ENCODE measurements at regions of chr13 and their contacts with region 1.

Region 1: GRCh38 chr13:110444226-110444653 is 117.3 kb downstream of the RAB20 start:
- DNase-seq: no peak
- H3K4me3 ChIP-seq: no peak overlapping the region
- H3K4me3 Mint-ChIP-seq: no peak overlapping the region
- H3K27ac Mint-ChIP-seq: peak overlapping the region; percentile 17
- H3K4me1 ChIP-seq: peaks cover 67% of the 10 kb centered on the region
- H3K4me1 Mint-ChIP-seq: peaks cover 35% of the 10 kb centered on the region
- H3K27me3 ChIP-seq: no peaks in the 10 kb centered on the region
- H3K27me3 Mint-ChIP-seq: no peaks in the 10 kb centered on the region
- CTCF ChIP-seq: peak; percentile 16 to 18

Region 2: DNA sequence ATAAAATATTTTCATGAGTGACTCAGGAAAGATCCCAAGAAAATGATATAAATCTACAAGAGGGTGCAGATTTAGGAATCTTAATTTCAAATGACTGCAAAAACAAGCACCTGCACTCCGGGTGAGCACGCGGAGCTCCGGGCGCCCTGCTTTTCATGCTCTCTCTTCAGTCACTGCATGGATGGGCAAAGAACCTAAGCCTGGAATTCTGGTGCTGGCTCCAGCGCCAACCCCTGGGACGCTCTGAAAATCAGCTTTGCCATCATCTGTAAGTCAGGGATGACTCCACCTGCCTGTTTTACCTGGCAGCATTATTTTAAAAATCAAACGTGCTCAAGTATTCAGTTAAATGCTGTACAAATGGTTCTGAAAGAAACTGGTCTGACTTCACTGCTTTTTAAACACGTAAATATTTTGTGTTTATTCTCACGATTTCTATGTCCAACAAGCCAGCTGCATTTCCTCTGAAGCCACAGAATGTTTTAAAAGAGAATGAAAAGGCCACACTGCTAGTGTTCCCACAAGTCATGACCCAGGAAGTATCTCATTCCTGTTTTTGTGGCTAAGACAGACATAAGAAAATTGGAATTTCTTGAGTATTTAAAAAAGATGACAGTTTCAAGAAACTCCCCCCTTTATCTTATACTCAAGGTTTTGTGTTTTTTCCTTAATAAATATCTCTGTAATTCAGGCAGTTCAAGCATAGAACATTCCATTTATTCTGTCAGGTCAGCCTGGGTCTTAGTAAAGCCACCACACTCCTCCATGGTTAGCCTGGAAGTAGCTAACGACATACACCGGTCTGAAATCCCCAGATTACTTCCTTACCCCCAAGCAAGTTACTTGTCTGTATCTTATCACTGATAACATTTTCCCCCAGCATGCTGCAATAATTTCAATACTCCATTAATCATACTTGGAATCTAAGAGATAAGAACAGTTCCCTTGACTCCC is 218.4 kb before region 1 on chr13:
- CTCF ChIA-PET with region 1: no interaction called
- POLR2A ChIA-PET with region 1: no interaction called
- intact Hi-C with region 1: loop called (anchors 1 kb)
- DNase-seq: peak in 1 of 2 experiments; percentile 45
- H3K4me3 ChIP-seq: no peak overlapping the region
- H3K4me3 Mint-ChIP-seq: no peak overlapping the region
- H3K27ac Mint-ChIP-seq: peak overlapping the region; percentile 40
- H3K4me1 ChIP-seq: peaks cover 32% of the 10 kb centered on the region
- H3K4me1 Mint-ChIP-seq: peaks cover 22% of the 10 kb centered on the region
- H3K27me3 ChIP-seq: no peaks in the 10 kb centered on the region
- H3K27me3 Mint-ChIP-seq: no peaks in the 10 kb centered on the region
- CTCF ChIP-seq: no peak

Region 3: GRCh38 chr13:110412132-110412914 is 31.9 kb before region 1 on chr13:
- CTCF ChIA-PET with region 1: interaction called, 4 read pairs
- POLR2A ChIA-PET with region 1: no interaction called
- intact Hi-C with region 1: loop called (anchors 2 kb)
- DNase-seq: peak; percentile 80 to 88
- H3K4me3 ChIP-seq: no peak overlapping the region
- H3K4me3 Mint-ChIP-seq: no peak overlapping the region
- H3K27ac Mint-ChIP-seq: peak overlapping the region; percentile 83
- H3K4me1 ChIP-seq: peaks cover 13% of the 10 kb centered on the region
- H3K4me1 Mint-ChIP-seq: peaks cover 12% of the 10 kb centered on the region
- H3K27me3 ChIP-seq: no peaks in the 10 kb centered on the region
- H3K27me3 Mint-ChIP-seq: no peaks in the 10 kb centered on the region
- CTCF ChIP-seq: peak; percentile 94

Region 4: DNA sequence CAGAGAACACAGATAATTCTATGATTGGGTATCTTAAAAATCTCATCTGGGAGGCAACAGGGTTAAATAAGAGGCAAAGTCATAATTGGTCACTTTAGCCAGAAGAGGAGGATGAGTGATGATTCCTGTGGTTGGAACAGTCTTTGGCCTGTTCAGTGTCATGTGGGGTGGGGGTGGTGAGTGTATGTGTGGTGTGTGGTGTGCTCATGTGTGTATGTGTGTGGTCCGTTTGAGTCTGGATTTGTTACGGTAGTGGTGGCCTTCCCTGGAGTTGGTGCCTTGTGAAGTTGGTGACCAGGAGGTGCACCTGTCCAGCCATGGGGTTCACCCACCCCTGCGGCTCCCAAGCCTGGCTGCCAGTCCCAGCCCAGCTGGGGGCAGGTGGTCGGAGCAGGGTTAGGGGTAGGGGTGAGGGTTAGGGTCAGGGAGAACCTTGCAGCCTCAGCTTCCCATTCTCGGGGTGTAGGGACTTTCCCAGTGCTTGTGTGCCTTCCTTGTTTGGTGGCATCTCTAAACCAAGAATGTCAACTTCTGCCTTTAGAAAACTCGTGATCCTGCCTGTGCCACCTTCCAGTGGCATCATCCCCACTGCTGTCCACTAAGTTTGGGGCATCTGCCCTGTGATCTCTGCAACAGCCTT is 19.8 kb after region 1 on chr13:
- CTCF ChIA-PET with region 1: no interaction called
- POLR2A ChIA-PET with region 1: no interaction called
- intact Hi-C with region 1: no loop called
- DNase-seq: no peak
- H3K4me3 ChIP-seq: no peak overlapping the region
- H3K4me3 Mint-ChIP-seq: no peak overlapping the region
- H3K27ac Mint-ChIP-seq: no peak overlapping the region
- H3K4me1 ChIP-seq: no peaks in the 10 kb centered on the region
- H3K4me1 Mint-ChIP-seq: no peaks in the 10 kb centered on the region
- H3K27me3 ChIP-seq: no peaks in the 10 kb centered on the region
- H3K27me3 Mint-ChIP-seq: no peaks in the 10 kb centered on the region
- CTCF ChIP-seq: no peak

Region 5: DNA sequence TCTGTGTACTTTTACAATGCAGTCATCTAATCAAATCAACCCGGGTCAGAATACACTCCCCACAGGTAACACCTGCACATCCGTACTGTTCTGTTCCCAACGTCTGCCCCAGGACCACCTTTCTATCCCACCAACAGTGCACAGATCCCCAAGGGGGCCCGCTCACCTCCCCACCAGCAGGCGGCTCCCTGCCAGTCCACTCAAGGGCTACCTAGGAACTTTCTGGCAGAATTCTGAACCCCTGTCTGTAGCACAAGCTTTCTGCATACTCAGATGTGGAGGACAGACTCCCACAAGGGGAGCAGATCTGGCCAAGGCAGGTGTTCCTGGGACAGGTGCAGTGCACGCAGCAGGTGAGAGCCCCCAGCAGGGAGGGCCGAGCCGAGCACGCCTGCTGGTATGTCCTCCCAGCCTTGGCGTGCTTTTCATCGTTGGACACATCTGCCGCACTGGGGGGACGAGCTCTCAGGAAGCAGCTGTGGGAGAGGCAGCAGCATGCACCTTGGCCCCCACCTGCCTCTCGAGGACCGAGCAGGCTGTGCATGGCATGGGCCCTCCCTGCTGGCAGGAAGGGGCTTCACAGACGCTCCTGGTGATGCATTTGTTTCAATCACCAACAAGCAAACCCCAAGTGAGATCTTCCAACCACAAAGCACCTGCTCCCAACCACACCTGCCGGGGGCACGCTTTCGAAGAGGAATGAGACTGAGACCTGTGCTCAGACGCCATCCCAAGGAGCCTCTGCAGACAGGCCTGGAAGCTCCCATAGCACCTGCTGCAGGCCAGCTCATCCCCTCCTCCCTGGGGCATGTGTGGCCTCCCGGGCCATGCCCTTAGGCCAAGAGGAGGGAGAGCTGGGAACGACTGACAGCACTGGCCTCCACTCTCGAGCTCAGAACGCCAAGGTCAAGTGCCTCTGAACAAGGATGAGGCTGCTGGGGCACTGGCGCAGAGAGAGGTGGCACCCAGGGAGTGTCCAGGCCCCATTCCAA is 81.4 kb after region 1 on chr13:
- CTCF ChIA-PET with region 1: no interaction called
- POLR2A ChIA-PET with region 1: no interaction called
- intact Hi-C with region 1: no loop called
- DNase-seq: no peak
- H3K4me3 ChIP-seq: no peak overlapping the region
- H3K4me3 Mint-ChIP-seq: no peak overlapping the region
- H3K27ac Mint-ChIP-seq: peak overlapping the region; percentile 84
- H3K4me1 ChIP-seq: peaks cover 41% of the 10 kb centered on the region
- H3K4me1 Mint-ChIP-seq: peaks cover 38% of the 10 kb centered on the region
- H3K27me3 ChIP-seq: no peaks in the 10 kb centered on the region
- H3K27me3 Mint-ChIP-seq: no peaks in the 10 kb centered on the region
- CTCF ChIP-seq: no peak

Region 6: GRCh38 chr13:110561344-110562035 is 117.2 kb after region 1 on chr13 and contains the start of gene RAB20:
- CTCF ChIA-PET with region 1: no interaction called
- POLR2A ChIA-PET with region 1: no interaction called
- intact Hi-C with region 1: loop called (anchors 2 kb)
- DNase-seq: peak; percentile 92 to 94
- H3K4me3 ChIP-seq: peak within 1 kb of the TSS; percentile 84
- H3K4me3 Mint-ChIP-seq: peak within 1 kb of the TSS; percentile 85
- H3K27ac Mint-ChIP-seq: peak within 1 kb of the TSS; percentile 75
- H3K4me1 ChIP-seq: peaks cover 32% of the 10 kb centered on the region
- H3K4me1 Mint-ChIP-seq: peaks cover 35% of the 10 kb centered on the region
- H3K27me3 ChIP-seq: no peaks in the 10 kb centered on the region
- H3K27me3 Mint-ChIP-seq: no peaks in the 10 kb centered on the region
- CTCF ChIP-seq: no peak
- total RNA-seq, gene RAB20: 37.9 and 40.1 TPM in 2 replicates

Measured in Caco-2 (cell line).